Activated T-helper 2 cell treated with anti-CD3 and anti-CD28 coated beads, Interferon-gamma antibody, Interleukin-2, Interleukin-4, amounts not matched to agents 10 μg/mL and 5 μg/mL and 100 μg/mL, durations not matched to agents 14 hours and 24 hours and 36 hours (primary cell): ENCODE measurements at regions of chr11 and their contacts with region 1.

Region 1: GRCh38 chr11:35272391-35272902 is 133.5 kb downstream of the CD44 start:
- DNase-seq: peak; percentile 36
- H3K4me3 Mint-ChIP-seq: peak overlapping the region; percentile 23
- H3K27ac Mint-ChIP-seq: peak overlapping the region; percentile 79
- H3K4me1 Mint-ChIP-seq: peaks cover 57% of the 10 kb centered on the region
- H3K27me3 Mint-ChIP-seq: peaks cover 18% of the 10 kb centered on the region

Region 2: GRCh38 chr11:33893711-33894397 is 1378.6 kb before region 1 on chr11:
- intact Hi-C with region 1: loop called (anchors 10 kb)
- DNase-seq: peak; percentile 59
- H3K4me3 Mint-ChIP-seq: peak overlapping the region; percentile 16
- H3K27ac Mint-ChIP-seq: peak overlapping the region; percentile 46
- H3K4me1 Mint-ChIP-seq: peaks cover 19% of the 10 kb centered on the region
- H3K27me3 Mint-ChIP-seq: peaks cover 76% of the 10 kb centered on the region

Region 3: GRCh38 chr11:35214792-35215193 is 57.7 kb before region 1 on chr11:
- intact Hi-C with region 1: no loop called
- DNase-seq: peak; percentile 11
- H3K4me3 Mint-ChIP-seq: no peak overlapping the region
- H3K27ac Mint-ChIP-seq: no peak overlapping the region
- H3K4me1 Mint-ChIP-seq: peaks cover 45% of the 10 kb centered on the region
- H3K27me3 Mint-ChIP-seq: no peaks in the 10 kb centered on the region

Region 4: GRCh38 chr11:35237860-35238715 is 34.4 kb before region 1 on chr11:
- intact Hi-C with region 1: loop called (anchors 2 kb)
- DNase-seq: peak; percentile 34
- H3K4me3 Mint-ChIP-seq: no peak overlapping the region
- H3K27ac Mint-ChIP-seq: no peak overlapping the region
- H3K4me1 Mint-ChIP-seq: peaks cover 78% of the 10 kb centered on the region
- H3K27me3 Mint-ChIP-seq: peaks cover 13% of the 10 kb centered on the region

Region 5: DNA sequence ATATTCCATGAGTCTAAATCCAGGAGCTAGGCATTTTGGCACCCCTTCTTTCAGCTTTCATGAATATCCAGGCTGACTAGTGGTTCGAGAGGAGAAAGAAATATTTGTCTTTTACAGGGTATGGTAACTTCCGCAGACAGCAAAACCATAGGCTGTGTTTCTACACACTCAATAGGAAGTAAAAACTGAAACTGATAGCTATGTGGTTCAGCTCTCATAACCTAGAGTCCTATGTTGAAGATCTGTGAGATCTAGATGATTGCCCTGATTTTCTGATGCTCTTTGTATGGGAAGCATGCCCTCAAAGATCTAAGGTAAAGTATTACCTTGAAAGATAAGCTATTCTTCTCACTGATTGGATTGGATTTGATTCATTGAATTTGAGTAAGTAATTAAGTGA is 15.2 kb before region 1 on chr11:
- intact Hi-C with region 1: loop called (anchors 2 kb)
- DNase-seq: no peak
- H3K4me3 Mint-ChIP-seq: no peak overlapping the region
- H3K27ac Mint-ChIP-seq: no peak overlapping the region
- H3K4me1 Mint-ChIP-seq: peaks cover 20% of the 10 kb centered on the region
- H3K27me3 Mint-ChIP-seq: peaks cover 68% of the 10 kb centered on the region

Region 6: DNA sequence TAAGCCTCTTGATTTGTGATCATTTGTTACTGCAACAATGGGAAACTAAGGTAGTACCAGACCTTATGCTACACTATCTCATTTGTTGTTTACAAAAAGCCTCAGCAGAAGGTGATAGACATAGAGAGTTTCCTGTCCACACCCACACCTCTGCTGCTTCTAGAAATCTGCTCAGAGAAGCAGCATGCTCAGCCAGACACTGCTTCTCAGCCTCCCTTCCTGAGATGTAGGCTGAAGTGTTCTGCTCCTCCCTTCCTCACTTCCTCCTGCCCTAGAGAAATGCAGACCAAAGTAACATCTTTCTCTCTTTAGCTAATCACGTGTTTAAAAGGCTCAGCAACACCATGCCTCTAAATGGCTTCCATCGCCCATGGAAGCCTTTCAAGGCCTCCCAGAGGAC is 58.5 kb after region 1 on chr11:
- intact Hi-C with region 1: no loop called
- DNase-seq: peak; percentile 37
- H3K4me3 Mint-ChIP-seq: no peak overlapping the region
- H3K27ac Mint-ChIP-seq: peak overlapping the region; percentile 62
- H3K4me1 Mint-ChIP-seq: peaks cover 29% of the 10 kb centered on the region
- H3K27me3 Mint-ChIP-seq: no peaks in the 10 kb centered on the region

Region 7: DNA sequence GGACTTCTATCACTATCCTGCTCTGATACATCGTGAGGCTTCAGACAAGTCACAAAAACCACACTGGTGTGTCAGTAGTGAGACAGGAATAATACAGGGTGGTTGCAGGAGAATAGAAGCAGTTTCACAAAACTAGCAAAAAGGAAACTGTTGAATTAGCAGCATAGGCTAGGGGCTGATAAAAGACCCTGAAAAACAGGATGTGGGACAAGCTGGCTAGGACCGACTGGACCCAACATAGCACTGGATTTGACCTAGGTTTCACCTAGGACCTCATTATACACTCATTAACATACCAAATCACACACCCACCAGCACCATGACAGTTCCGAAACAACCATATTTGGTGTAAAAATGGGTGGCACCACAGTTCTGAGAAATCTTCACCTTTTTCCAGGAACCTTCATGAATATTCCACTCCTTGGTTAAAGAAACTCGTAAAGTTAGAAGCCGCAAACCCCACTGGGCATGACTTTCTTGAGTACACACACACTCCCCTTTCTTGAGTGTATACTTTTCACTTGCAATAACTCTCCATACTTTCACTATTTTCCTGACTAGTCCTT is 70.7 kb after region 1 on chr11:
- intact Hi-C with region 1: loop called (anchors 1 kb)
- DNase-seq: peak; percentile 74
- H3K4me3 Mint-ChIP-seq: peak overlapping the region; percentile 20
- H3K27ac Mint-ChIP-seq: peak overlapping the region; percentile 81
- H3K4me1 Mint-ChIP-seq: peaks cover 46% of the 10 kb centered on the region
- H3K27me3 Mint-ChIP-seq: no peaks in the 10 kb centered on the region